Activated CD4-positive, alpha-beta T cell treated with anti-CD3 and anti-CD28 coated beads for 36 hours (primary cell): ENCODE measurements at regions of chr16 and their contacts with region 1.

Region 1: DNA sequence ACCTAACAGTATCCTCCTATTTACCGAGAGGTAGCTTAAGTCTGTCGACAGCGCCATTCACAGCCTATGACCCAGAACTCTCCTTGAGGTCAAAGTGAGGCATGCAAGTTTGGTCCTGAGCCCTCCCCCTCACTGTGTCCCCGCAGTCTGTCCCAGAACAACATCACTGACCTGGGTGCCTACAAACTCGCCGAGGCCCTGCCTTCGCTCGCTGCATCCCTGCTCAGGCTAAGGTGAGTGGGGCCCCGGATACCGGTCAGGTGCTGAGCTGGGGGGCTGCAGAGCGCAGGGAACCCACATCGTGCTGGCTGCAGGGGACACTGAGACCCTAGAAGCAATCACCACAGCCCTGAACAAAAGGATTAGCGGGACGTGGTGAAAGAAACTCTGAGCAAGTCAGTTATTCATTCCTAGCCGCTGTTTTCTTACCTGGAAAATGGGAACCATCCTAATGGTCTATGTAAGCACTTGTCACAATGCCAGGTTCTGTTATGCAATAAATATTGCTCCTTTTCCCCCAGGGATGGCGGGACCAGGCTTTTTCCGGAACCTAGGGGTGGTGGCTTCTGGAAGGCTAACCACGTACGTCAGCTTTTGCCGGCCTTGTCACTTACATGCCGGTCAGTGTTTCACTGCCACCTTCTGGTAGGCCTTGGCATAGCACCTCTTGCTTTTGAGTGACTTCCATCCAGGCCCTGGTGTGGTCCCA is 23.8 kb downstream of the DEXI start:
- DNase-seq: peak; percentile 92
- ATAC-seq: peak; percentile 74
- H3K4me3 Mint-ChIP-seq: no peak overlapping the region
- H3K27ac Mint-ChIP-seq: no peak overlapping the region
- H3K4me1 Mint-ChIP-seq: peaks cover 13% of the 10 kb centered on the region
- H3K27me3 Mint-ChIP-seq: no peaks in the 10 kb centered on the region

Region 2: DNA sequence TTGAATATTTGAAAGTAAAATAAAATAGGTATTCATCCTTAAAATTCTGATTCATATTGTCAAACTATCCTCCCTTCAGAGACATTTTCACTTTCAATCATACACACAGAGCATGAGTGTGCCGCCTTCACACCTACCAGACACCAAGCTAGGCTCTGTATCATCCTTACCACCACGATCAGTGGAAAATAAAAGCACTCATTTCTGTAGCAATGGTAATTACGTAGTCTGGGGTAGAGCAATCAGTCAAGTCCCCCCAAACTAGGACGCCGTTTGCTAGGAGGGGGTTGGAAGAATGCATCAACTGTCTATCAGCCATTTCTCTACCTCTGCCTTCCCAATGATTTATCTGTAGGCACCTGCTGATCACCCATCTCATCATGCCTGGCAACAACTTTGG is 651.6 kb before region 1 on chr16:
- CTCF ChIA-PET with region 1: no interaction called
- POLR2A ChIA-PET with region 1: no interaction called
- intact Hi-C with region 1: loop called in 1 of 2 experiments (anchors 5 kb)
- DNase-seq: peak; percentile 71
- ATAC-seq: peak; percentile 98
- H3K4me3 Mint-ChIP-seq: no peak overlapping the region
- H3K27ac Mint-ChIP-seq: peak overlapping the region; percentile 63
- H3K4me1 Mint-ChIP-seq: peaks cover 12% of the 10 kb centered on the region
- H3K27me3 Mint-ChIP-seq: no peaks in the 10 kb centered on the region

Region 3: DNA sequence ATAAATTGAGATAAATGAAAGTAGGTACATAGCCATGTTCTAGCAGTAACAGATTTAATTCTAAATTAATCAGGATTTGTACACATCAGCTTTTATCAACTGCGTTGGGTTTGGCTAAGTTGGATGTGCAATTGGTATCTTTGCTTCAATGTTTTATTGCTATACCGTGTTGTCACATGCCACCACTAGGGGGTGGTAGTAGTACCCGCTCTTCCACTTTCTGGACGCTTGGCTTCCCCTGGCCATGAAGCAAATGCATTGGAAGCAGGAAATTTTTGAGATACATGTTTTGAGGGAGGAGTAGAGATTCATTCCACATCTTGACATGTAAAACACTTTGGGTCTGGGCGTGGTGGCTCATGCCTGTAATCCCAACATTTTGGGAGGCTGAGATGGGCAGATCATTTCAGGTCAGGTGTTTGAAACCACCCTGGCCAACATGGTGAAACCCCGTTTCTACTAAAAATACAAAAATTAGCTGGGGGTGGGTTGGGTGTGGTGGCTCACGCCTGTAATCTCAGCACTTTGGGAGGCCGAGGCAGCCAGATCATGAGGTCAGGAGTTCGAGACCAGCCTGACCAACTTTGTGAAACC is 396.7 kb before region 1 on chr16:
- CTCF ChIA-PET with region 1: interaction called, 3 read pairs
- POLR2A ChIA-PET with region 1: no interaction called
- intact Hi-C with region 1: loop called in 1 of 2 experiments (anchors 1 kb)
- DNase-seq: peak; percentile 66
- ATAC-seq: peak; percentile 68
- H3K4me3 Mint-ChIP-seq: no peak overlapping the region
- H3K27ac Mint-ChIP-seq: no peak overlapping the region
- H3K4me1 Mint-ChIP-seq: peaks cover 2% of the 10 kb centered on the region
- H3K27me3 Mint-ChIP-seq: peaks cover 3% of the 10 kb centered on the region

Region 4: DNA sequence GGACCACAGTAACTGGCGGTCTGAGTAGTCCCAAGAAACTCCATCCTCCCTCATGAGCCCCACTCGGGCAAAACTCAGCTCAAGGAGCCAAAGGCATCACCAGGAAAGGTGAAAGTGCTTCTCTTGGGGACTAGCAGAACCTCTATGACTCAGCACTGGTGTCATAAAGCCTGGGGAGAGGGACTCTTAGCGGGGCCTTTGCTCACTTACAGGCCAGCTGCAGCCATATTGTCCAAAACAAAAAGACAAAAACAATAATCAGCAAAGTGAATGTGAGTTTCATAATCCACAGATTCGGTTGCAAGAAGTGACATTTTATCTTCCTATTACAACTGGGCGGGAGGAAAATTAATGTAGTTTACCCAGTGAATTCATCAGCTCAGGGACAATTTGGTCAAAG is 223.6 kb before region 1 on chr16 and contains the start of gene TEKT5:
- CTCF ChIA-PET with region 1: no interaction called
- POLR2A ChIA-PET with region 1: no interaction called
- intact Hi-C with region 1: no loop called
- DNase-seq: no peak
- ATAC-seq: no peak
- H3K4me3 Mint-ChIP-seq: no peak within 1 kb of the TSS
- H3K27ac Mint-ChIP-seq: no peak within 1 kb of the TSS
- H3K4me1 Mint-ChIP-seq: no peaks in the 10 kb centered on the region
- H3K27me3 Mint-ChIP-seq: peaks cover 14% of the 10 kb centered on the region
- total RNA-seq, gene TEKT5: 0.27 TPM in 1 of 2 experiments, not detected in the other

Region 5: DNA sequence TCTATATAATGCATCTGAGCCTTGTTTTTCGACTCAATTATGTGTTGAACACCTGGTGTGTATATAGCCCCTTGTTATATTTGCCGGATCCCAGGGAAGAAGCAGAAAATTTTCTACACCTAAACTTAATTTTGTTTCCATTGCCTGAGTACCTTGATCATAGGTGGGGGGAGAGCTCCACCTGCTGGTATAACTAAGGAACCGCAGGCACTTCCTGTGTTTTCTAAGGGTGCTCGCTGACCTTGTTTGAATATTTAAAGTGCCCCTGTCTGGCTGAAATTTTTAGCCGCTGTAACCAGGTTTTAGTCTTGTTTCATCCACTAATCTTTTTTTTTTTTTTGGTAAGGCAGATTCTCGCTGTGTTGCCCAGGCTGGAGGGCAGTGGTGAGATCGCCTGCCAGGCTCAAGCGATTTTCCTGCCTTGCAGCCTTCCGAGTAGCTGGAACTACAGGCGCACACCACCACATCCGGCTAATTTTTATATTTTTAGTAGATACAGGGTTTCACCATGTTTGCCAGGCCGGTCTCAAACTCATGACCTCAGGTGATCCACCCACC is 181.3 kb before region 1 on chr16:
- CTCF ChIA-PET with region 1: interaction called, 9 read pairs
- POLR2A ChIA-PET with region 1: no interaction called
- intact Hi-C with region 1: loop called in 1 of 2 experiments (anchors 1 kb)
- DNase-seq: peak; percentile 77
- ATAC-seq: peak; percentile 46
- H3K4me3 Mint-ChIP-seq: peak overlapping the region; percentile 36
- H3K27ac Mint-ChIP-seq: no peak overlapping the region
- H3K4me1 Mint-ChIP-seq: peaks cover 29% of the 10 kb centered on the region
- H3K27me3 Mint-ChIP-seq: no peaks in the 10 kb centered on the region

Region 6: DNA sequence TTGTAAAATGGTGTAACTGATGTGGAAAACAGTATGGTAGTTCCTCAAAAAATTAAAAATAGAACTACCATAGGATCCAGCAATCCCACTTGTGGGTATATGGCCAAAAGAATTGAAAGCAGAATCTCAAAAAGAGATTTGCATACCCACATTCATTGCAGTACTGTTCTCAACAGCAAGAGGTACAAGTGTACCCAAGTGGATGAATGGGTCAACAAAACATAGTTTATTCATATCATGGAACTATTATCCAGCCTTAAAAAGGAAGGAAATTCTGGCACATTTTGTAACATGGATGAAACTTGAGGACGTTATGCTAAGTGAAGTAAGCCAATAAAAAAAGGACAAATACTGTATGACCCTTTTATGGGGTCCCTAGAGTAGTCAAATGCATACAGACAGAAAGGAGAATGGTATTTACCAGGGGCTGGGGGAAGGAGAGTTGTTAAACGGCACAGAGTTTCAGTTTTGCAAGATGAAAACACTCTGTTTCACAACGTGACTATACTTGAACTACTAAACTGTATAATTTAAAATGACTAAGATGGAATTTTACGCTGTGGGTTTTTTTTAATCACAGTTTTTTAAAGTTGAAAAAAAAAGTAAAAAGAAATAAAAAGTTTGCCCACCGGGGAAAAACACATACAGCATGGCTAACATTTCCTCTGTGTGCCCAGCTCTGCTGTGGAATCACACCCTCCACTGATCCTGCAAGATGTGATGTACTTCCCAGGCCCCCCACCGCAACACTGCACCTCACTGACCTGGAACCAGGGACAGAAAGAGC is 105.9 kb before region 1 on chr16:
- CTCF ChIA-PET with region 1: interaction called, 3 read pairs
- POLR2A ChIA-PET with region 1: no interaction called
- intact Hi-C with region 1: loop called (anchors 1 to 5 kb)
- DNase-seq: peak; percentile 10
- ATAC-seq: peak; percentile 93
- H3K4me3 Mint-ChIP-seq: no peak overlapping the region
- H3K27ac Mint-ChIP-seq: no peak overlapping the region
- H3K4me1 Mint-ChIP-seq: peaks cover 9% of the 10 kb centered on the region
- H3K27me3 Mint-ChIP-seq: no peaks in the 10 kb centered on the region

Region 7: DNA sequence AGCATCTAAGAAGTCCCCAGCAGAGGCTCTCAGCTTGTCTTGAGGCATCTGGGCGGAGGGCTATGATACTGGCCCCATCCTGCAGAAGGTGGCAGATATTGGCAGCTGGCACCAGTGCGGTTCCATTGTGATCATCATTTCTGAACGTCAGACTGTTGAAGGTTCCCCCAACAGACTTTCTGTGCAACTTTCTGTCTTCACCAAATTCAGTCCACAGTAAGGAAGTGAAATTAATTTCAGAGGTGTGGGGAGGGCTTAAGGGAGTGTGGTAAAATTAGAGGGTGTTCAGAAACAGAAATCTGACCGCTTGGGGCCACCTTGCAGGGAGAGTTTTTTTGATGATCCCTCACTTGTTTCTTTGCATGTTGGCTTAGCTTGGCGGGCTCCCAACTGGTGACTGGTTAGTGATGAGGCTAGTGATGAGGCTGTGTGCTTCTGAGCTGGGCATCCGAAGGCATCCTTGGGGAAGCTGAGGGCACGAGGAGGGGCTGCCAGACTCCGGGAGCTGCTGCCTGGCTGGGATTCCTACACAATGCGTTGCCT is 41.6 kb before region 1 on chr16 and contains the start of gene CIITA:
- CTCF ChIA-PET with region 1: interaction called, 4 read pairs
- POLR2A ChIA-PET with region 1: no interaction called
- intact Hi-C with region 1: loop called in 1 of 2 experiments (anchors 2 kb)
- DNase-seq: peak; percentile 77
- ATAC-seq: peak; percentile 50
- H3K4me3 Mint-ChIP-seq: peak within 1 kb of the TSS; percentile 70
- H3K27ac Mint-ChIP-seq: no peak within 1 kb of the TSS
- H3K4me1 Mint-ChIP-seq: peaks cover 62% of the 10 kb centered on the region
- H3K27me3 Mint-ChIP-seq: peaks cover 71% of the 10 kb centered on the region
- total RNA-seq, gene CIITA: 0.87 to 1.4 TPM